Dendritic cell treated with granulocyte-macrophage colony-stimulating factor and Interleukin-4, amounts not matched to agents 40 ng/mL and 50 ng/mL, for 4 days (primary cell): ENCODE measurements at regions of chr2 and their contacts with region 1.

Region 1: DNA sequence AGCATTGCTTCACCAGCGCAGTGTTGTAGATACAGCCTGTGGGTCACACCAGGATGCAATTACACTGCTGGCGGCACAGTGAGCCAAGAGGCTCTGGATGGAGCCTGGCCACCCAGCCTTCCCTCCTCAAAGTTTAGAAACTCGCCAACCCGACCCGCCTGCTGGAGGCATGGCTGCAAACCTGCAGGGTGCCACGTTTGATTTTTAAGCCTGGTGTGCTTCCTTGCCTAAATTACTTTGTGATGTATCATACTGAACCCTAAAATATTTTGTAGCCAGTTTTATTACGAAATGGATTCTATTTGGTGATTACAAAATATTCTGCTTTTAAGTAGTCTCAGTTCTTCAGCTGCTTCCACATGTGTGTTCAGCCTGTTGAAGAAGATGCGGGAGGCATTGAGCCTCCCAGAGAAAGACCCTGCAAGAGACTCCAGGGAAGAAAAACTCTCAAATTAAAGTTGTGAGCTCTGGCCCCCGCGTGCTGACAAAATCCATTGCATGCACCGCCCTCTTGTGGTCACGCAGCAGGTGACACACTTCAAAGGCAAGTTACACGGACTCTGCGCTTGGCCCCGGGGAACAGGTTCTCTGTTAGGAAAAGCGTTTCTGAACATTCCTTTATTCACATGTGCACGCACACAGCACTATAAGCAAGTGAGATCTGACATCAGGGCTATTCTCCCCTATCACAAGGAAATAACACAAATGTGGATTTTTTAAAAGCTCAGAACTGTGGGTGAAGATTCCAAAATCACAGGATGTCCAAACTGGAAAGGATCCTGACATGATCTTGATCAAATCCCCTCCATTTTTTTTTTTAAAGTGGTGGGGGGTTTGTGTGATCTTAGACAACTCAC is 63.0 kb upstream of the TWIST2 start:
- H3K4me3 Mint-ChIP-seq: no peak overlapping the region
- H3K27ac Mint-ChIP-seq: no peak overlapping the region
- H3K4me1 Mint-ChIP-seq: no peaks in the 10 kb centered on the region
- H3K27me3 Mint-ChIP-seq: peaks cover 6% of the 10 kb centered on the region

Region 2: DNA sequence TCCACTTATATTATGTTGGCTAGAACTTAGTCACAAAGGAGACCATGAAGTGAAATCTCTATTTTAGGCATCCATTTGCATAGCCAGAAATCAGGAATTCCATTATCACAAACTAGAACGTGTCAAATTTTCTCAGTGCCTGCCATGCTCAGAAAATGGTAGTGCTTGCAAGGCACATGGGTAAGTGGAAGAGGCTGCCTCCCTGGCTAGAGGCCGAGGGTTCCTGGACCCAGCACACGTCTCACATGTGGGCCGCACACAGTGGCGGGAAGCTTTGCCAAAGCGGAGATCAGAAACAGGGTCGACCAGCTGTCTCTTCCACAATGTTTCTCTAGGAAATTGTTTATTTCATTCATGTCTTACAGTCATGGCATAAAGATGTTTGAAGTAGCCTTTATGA is 422.3 kb before region 1 on chr2:
- intact Hi-C with region 1: loop called (anchors 5 kb)
- H3K4me3 Mint-ChIP-seq: no peak overlapping the region
- H3K27ac Mint-ChIP-seq: no peak overlapping the region
- H3K4me1 Mint-ChIP-seq: no peaks in the 10 kb centered on the region
- H3K27me3 Mint-ChIP-seq: no peaks in the 10 kb centered on the region

Region 3: DNA sequence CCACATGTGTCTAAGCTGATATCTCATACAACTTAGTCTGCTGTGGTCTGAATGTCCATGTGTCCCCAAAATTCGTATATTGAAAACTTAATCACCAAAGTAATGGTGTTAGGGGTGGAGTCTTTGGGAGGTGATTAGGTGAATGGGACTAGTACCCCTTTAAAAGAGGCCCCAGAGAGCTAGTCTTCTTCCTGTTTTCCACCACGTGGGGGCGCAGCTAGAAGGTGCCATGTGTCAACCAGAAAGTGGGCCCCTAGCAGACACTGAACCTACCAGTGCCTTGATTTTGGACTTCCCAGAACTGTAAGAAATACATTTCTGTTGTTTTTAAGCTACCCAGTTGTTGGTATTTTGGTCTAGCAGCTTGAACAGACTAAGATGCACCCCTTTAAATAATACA is 271.6 kb before region 1 on chr2:
- intact Hi-C with region 1: loop called (anchors 2 kb)
- H3K4me3 Mint-ChIP-seq: no peak overlapping the region
- H3K27ac Mint-ChIP-seq: no peak overlapping the region
- H3K4me1 Mint-ChIP-seq: no peaks in the 10 kb centered on the region
- H3K27me3 Mint-ChIP-seq: peaks cover 6% of the 10 kb centered on the region

Region 4: DNA sequence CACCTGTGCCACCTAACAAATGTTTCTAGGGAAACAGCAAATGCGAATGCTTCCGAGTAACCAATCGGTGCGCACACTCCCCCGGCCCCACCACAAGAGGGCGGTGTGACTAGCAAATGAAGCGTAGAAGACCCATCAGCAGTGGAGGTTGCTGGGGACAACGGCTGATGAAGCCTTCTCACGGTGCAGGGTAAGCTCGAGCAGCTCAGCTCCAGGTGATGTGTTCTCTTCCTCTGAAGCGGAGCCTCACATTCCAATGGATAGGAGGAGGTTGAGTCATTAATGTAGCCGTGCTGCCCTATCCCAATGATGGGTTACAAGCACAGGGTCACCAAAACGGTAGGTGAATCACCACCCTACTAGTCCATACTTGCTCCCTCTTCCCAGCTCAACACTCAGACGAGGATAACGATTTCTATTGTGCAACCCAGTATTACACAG is 64.6 kb before region 1 on chr2:
- intact Hi-C with region 1: loop called (anchors 1 kb)
- H3K4me3 Mint-ChIP-seq: no peak overlapping the region
- H3K27ac Mint-ChIP-seq: no peak overlapping the region
- H3K4me1 Mint-ChIP-seq: no peaks in the 10 kb centered on the region
- H3K27me3 Mint-ChIP-seq: peaks cover 25% of the 10 kb centered on the region

Region 5: GRCh38 chr2:238847841-238848690 is 63.2 kb after region 1 on chr2 and contains the start of gene TWIST2:
- intact Hi-C with region 1: no loop called
- H3K4me3 Mint-ChIP-seq: peak within 1 kb of the TSS; percentile 61
- H3K27ac Mint-ChIP-seq: no peak within 1 kb of the TSS
- H3K4me1 Mint-ChIP-seq: peaks cover 19% of the 10 kb centered on the region
- H3K27me3 Mint-ChIP-seq: peaks cover 84% of the 10 kb centered on the region